MCF 10A (cell line): ENCODE measurements at regions of chr5 and their contacts with region 1.

Region 1: DNA sequence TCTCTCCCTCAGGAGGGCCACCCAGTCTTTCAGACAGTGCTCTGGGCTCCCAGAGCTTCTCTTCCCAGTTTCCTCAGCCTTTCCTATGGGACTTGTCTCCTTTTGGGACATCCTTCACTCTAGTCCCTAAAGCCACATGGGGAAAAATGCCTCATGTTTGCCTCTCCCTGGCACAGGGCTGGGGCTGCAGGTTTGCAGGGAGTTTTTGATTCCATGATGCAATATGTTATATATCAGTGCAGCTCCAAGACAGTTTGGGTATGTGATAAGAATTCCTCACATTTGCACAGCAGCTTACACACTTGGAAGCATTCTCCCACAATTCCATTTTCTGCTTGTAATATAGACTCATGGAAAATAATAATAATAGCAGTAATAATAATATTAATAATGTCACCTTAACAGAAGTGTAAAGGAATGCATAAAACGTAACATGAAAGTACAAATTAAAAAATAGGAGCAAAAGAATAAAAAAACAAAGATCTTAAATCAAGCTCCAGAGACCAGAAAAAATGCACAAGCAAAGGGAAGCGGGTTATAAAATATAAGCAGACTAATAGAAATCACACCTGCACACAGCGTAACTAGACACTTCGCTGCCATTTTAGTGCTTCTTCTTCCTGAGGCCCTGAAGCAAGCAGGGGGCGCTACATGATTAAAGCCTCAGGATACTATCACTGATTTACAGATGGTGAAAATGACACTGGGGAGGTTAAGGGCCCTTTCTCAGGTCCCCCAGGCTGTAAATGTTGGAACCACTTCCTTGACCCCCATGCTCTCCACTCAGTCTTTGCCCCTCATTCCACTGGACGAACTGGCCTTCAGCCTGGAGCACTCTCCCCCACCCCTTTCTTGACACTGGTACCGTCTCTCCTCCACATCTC is 70.0 kb upstream of the IL17B start:
- DNase-seq: peak; percentile 54
- H3K4me3 Mint-ChIP-seq: no peak overlapping the region
- H3K27ac Mint-ChIP-seq: peak overlapping the region; percentile 55
- H3K4me1 Mint-ChIP-seq: peaks cover 45% of the 10 kb centered on the region
- H3K27me3 Mint-ChIP-seq: no peaks in the 10 kb centered on the region
- CTCF ChIP-seq: no peak

Region 2: GRCh38 chr5:149325166-149325735 is 123.8 kb before region 1 on chr5:
- CTCF ChIA-PET with region 1: interaction called, 3 read pairs
- POLR2A ChIA-PET with region 1: interaction called, 10 read pairs
- intact Hi-C with region 1: no loop called
- DNase-seq: peak; percentile 92
- H3K4me3 Mint-ChIP-seq: no peak overlapping the region
- H3K27ac Mint-ChIP-seq: peak overlapping the region; percentile 96
- H3K4me1 Mint-ChIP-seq: peaks cover 36% of the 10 kb centered on the region
- H3K27me3 Mint-ChIP-seq: no peaks in the 10 kb centered on the region
- CTCF ChIP-seq: no peak

Region 3: GRCh38 chr5:149471406-149472183 is 22.5 kb after region 1 on chr5:
- CTCF ChIA-PET with region 1: interaction called, 26 read pairs
- POLR2A ChIA-PET with region 1: interaction called, 1,058 read pairs
- intact Hi-C with region 1: no loop called
- DNase-seq: peak; percentile 63
- H3K4me3 Mint-ChIP-seq: no peak overlapping the region
- H3K27ac Mint-ChIP-seq: peak overlapping the region; percentile 64
- H3K4me1 Mint-ChIP-seq: peaks cover 28% of the 10 kb centered on the region
- H3K27me3 Mint-ChIP-seq: no peaks in the 10 kb centered on the region
- CTCF ChIP-seq: no peak

Region 4: DNA sequence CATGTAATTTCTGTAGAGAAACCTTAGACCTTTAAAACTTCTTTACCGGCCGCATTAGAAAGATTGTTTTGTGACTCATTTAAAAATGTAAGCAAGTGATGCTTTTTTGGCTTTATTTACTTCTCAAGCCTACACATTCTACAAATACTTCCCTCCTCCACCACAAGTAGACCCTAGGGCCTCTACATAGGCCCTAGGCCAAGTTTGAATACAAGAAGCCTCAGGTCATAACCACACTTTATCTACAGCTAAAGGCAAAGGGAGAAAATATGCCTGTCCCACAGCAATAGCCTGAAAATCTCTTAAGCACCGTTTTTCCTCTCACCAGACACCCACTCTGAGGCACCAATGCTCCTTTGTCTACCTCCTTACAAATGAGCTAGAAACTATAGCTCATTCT is 48.3 kb after region 1 on chr5:
- CTCF ChIA-PET with region 1: interaction called, 6 read pairs
- POLR2A ChIA-PET with region 1: interaction called, 38 read pairs
- intact Hi-C with region 1: no loop called
- DNase-seq: no peak
- H3K4me3 Mint-ChIP-seq: no peak overlapping the region
- H3K27ac Mint-ChIP-seq: peak overlapping the region; percentile 14
- H3K4me1 Mint-ChIP-seq: no peaks in the 10 kb centered on the region
- H3K27me3 Mint-ChIP-seq: no peaks in the 10 kb centered on the region
- CTCF ChIP-seq: no peak

Region 5: GRCh38 chr5:150033334-150033733 is 584.3 kb after region 1 on chr5:
- CTCF ChIA-PET with region 1: no interaction called
- POLR2A ChIA-PET with region 1: no interaction called
- intact Hi-C with region 1: no loop called
- DNase-seq: no peak
- H3K4me3 Mint-ChIP-seq: no peak overlapping the region
- H3K27ac Mint-ChIP-seq: no peak overlapping the region
- H3K4me1 Mint-ChIP-seq: peaks cover 26% of the 10 kb centered on the region
- H3K27me3 Mint-ChIP-seq: no peaks in the 10 kb centered on the region
- CTCF ChIP-seq: no peak